Mammary epithelial cell (primary cell): ENCODE measurements at regions of chr15 and their contacts with region 1.

Region 1: DNA sequence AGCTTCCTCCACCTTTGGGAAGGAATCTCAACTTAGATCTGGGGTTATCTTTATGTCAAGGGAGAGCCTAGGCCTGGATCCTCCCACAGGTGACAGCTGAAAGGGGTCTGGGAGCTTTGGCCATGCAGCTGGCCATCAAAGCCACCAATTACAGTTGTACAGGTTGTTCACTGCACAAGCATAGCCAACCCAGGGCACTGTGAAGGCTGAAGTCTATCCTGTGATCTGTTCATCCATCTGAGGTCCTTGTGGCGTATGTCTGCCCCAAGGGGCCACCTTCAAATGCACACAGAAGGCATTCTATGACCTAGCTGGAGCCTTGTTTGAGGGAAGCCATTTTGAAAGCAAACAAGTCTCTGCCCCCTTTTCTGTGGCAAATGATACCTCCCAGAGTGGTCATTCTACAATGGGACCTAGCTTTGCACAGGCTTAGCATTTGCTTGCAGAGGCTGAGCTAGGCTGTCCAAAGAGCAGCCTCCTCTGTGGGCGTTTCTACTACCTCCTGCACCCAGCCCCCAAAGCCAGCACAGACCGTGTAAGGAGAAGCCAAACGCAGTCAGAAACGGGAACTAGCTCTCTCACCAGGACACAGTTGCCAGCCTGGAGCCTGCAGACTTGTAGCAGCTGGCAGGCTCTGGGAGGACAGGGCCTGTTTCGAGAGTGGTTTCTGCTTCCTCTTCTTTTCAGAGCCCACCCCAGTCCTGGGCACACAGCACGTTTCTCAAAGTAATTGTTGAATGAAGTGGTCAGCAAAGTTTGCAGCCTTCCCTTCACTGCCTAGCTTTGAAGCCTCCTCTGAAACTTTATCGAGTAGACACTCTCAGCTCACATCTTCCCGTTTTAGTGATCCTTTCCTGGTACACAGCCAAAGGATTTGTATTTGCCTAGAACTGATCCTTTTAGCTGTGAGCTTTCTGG is 157.3 kb upstream of the SMAD3 start:
- DNase-seq: no peak
- H3K4me3 ChIP-seq: no peak overlapping the region
- H3K27ac ChIP-seq: no peak overlapping the region
- H3K4me1 ChIP-seq: no peaks in the 10 kb centered on the region
- H3K27me3 ChIP-seq: peaks cover 3% of the 10 kb centered on the region
- CTCF ChIP-seq: no peak

Region 2: DNA sequence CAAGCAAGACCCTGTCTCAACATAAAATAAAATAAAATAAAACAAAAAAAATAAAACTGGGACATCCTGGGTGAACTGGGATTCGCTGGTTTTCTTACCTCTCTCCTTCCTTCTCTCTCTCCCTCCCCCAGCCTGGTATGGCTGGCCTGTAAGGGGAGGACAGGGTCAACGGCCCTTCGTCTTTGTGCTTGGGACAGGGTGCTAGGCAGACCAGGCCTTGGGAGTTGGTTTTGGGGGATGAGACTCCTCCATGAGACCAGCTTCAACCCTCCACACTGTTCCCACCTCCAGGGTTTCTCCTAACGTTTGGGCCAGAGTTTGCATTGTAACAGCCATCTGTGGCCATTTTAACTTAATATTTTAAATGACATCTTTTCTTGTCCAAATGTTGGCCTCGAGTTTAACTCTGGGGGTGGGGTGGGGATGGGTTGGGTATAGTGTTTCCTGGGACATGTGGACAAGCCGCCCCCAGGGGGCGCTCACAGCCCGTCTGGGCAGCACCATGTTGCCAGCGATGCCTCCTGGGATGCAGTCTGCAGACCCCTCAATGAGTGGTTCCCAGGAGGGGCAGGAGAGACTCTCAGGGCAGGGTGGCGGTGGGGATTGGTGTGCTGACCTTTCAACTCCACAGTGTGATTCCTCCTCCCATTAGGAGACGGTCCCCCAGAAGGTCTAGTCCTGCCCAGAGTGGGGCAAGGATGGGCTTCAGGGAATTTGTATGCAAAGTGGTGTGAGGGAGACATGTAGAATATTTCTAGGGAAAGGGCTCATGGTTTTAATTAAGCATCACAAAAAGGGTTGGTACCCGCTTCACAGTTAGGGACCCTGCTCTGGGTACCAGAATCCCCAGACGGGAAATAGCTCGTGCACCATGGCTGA is 304.5 kb before region 1 on chr15:
- CTCF ChIA-PET with region 1: no interaction called
- dilution Hi-C with region 1: no loop called
- in situ Hi-C with region 1: no loop called
- intact Hi-C with region 1: loop called (anchors 1 kb)
- DNase-seq: peak; percentile 17
- H3K4me3 ChIP-seq: no peak overlapping the region
- H3K27ac ChIP-seq: no peak overlapping the region
- H3K4me1 ChIP-seq: no peaks in the 10 kb centered on the region
- H3K27me3 ChIP-seq: no peaks in the 10 kb centered on the region
- CTCF ChIP-seq: peak; percentile 51 to 85

Region 3: GRCh38 chr15:66862878-66863335 is 45.2 kb before region 1 on chr15:
- CTCF ChIA-PET with region 1: no interaction called
- dilution Hi-C with region 1: no loop called
- in situ Hi-C with region 1: no loop called
- intact Hi-C with region 1: loop called (anchors 1 kb)
- DNase-seq: peak; percentile 82
- H3K4me3 ChIP-seq: no peak overlapping the region
- H3K27ac ChIP-seq: peak overlapping the region; percentile 8
- H3K4me1 ChIP-seq: peaks cover 12% of the 10 kb centered on the region
- H3K27me3 ChIP-seq: no peaks in the 10 kb centered on the region
- CTCF ChIP-seq: peak; percentile 95 to 97

Region 4: DNA sequence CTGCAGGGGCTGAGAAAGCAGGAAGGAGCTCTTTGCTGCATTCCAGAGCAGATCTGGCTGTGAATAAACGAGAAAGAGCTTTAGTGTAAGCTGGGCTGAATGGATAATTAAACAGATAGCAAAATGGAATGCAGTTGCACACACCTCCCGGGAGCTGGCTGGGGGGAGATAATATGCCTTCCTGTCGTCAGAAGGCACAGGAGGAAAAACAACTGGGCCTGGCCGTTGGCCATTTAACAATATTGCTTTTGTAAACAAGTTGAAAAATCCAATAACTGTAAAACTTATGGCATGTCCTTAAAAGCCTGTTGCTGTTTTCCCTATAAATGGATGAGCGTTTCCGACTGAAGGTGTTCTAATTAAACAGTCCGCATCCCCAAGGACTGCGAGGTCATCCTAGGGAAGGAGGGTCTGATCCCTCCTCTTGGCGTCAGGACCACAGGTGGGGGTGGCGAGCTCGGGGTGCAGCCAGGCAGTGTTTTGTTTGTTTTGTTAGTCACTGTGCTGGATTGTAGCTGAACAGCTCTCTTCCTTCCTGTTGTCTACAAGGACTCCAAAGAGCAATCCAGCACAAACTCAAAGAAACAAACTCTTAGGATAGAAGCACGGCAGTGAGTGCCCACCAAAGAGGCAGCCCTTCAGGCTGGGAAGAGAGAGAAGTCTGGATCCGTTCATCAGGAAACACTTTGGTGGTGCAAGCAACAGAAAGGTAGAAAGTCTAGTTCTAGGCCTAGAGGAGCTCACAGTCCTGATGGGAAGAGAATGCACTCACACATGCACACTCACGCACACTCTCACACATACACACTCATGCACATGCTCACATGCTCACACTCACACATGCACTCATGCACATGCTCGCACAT is 23.9 kb after region 1 on chr15:
- CTCF ChIA-PET with region 1: interaction called, 10 read pairs
- dilution Hi-C with region 1: no loop called
- in situ Hi-C with region 1: no loop called
- intact Hi-C with region 1: no loop called
- DNase-seq: peak; percentile 54
- H3K4me3 ChIP-seq: no peak overlapping the region
- H3K27ac ChIP-seq: no peak overlapping the region
- H3K4me1 ChIP-seq: peaks cover 19% of the 10 kb centered on the region
- H3K27me3 ChIP-seq: no peaks in the 10 kb centered on the region
- CTCF ChIP-seq: no peak